Panc1 (cell line): ENCODE measurements at regions of chr4 and their contacts with region 1.

Region 1: DNA sequence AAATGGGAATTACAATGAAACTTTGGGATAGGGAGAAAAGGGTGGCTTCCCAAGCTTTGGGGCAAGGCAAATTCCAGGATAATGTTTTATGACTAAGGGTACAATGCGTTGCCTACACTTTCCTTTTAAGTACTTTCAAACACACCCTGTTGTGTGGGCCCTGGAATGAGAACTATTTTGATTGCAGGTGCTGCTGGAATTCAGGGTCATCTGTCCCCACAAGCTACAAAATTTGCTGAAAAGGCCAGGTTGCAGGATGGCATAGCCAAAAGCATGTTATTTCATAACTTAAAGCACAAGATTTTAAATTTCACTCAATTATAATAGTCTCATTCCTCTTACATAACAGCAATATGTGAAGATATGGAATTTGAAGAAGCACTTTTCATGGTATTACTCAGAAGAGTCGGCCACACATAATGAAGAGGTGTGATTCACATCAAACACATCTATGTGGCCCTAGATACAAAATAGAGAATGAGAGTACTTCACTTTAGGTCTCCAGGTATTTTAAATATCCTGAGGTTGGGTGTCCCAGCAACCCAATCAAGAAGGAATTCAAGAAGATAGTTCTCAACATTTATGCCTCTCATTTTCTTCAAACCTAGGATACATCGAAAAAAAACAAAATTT is 89.3 kb downstream of the APBB2 start:
- DNase-seq: no peak
- ATAC-seq: no peak
- H3K4me3 ChIP-seq: no peak overlapping the region
- H3K27ac ChIP-seq: no peak overlapping the region
- H3K4me1 ChIP-seq: peaks cover 2% of the 10 kb centered on the region; the same call in 1 of the 2 replicates
- H3K27me3 ChIP-seq: no peaks in the 10 kb centered on the region
- CTCF ChIP-seq: no peak

Region 2: DNA sequence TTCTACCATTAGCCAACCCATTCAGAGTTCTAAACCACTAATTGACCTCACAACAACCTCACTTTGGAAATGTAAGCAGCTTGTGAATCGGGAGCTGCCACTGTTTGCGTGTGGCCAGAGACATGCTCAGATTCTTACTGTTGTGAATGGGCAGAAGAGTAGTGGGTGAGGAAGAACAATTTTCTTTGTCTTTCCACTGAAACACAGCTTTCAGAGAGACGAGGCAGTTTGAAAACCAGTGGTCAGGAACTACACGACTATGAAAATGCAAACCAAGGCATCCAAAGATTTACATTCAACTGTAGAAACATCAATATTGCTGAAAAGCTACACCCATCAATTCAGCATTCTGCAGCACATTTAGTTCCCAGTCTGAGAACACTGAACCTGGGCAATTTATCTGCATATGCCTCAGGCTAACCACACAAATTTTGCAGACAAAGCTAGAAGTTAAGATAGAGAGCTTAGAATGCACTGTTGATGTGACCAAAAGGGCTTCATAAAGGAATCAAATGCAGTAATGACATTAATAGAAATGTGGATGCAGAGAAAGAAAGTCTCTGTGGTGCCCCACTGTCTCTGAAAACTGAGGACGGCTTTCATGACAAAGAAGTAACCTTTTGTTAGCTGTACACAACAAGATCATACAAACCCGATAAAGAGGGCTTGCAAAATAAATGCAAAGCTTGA is 45.0 kb before region 1 on chr4:
- CTCF ChIA-PET with region 1: no interaction called
- POLR2A ChIA-PET with region 1: interaction called, 19 read pairs
- in situ Hi-C with region 1: no loop called
- intact Hi-C with region 1: no loop called
- DNase-seq: no peak
- ATAC-seq: no peak
- H3K4me3 ChIP-seq: no peak overlapping the region
- H3K27ac ChIP-seq: no peak overlapping the region
- H3K4me1 ChIP-seq: no peaks in the 10 kb centered on the region
- H3K27me3 ChIP-seq: no peaks in the 10 kb centered on the region
- CTCF ChIP-seq: no peak